Mammary epithelial cell (primary cell): ENCODE measurements at regions of chr11 and their contacts with region 1.

Region 1: GRCh38 chr11:33959855-33960400 is 68.1 kb upstream of the LMO2 start:
- DNase-seq: no peak
- H3K4me3 ChIP-seq: no peak overlapping the region
- H3K27ac ChIP-seq: no peak overlapping the region
- H3K4me1 ChIP-seq: no peaks in the 10 kb centered on the region
- H3K27me3 ChIP-seq: no peaks in the 10 kb centered on the region
- CTCF ChIP-seq: no peak

Region 2: DNA sequence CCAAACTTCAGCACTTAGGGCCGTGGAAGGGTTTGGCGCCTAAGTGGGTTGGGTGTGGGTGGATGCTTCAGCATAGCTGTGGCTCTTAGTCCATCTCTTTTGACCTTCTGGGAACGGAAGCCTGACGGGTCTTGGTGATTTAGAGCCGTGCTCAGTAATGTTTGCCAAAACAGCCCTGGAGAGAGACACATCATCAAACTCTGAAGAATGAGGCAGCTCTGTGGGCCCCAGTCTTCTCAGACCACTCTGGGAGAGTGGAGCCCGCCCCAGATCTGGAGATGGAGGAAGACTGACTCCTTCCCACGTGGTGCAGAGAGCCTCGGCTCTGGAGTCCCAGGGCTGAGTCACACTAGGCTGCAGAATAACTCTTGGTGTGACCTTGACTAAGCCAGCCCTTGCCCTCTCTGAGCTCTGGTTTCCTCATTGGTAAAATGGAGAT is 428.2 kb before region 1 on chr11:
- CTCF ChIA-PET with region 1: no interaction called
- dilution Hi-C with region 1: no loop called
- in situ Hi-C with region 1: no loop called
- intact Hi-C with region 1: no loop called
- DNase-seq: no peak
- H3K4me3 ChIP-seq: no peak overlapping the region
- H3K27ac ChIP-seq: no peak overlapping the region
- H3K4me1 ChIP-seq: no peaks in the 10 kb centered on the region
- H3K27me3 ChIP-seq: no peaks in the 10 kb centered on the region
- CTCF ChIP-seq: no peak

Region 3: GRCh38 chr11:33869481-33870422 is 90.2 kb before region 1 on chr11:
- CTCF ChIA-PET with region 1: no interaction called
- dilution Hi-C with region 1: no loop called
- in situ Hi-C with region 1: loop called in 1 of 2 experiments (anchors 10 kb)
- intact Hi-C with region 1: no loop called
- DNase-seq: peak; percentile 31
- H3K4me3 ChIP-seq: peak overlapping the region; percentile 50 to 73 (median 69)
- H3K27ac ChIP-seq: no peak overlapping the region
- H3K4me1 ChIP-seq: peaks cover 13% of the 10 kb centered on the region
- H3K27me3 ChIP-seq: peaks cover 20% of the 10 kb centered on the region
- CTCF ChIP-seq: no peak